ENCODE measurements at regions of chr3 and their contacts with region 1.

Region 1: GRCh38 chr3:32177702-32178198 is 60.7 kb upstream of the CMTM8 start:
- DNase-seq: peak; percentile 88
- ATAC-seq: peak; percentile 97
- H3K4me3 ChIP-seq: peak overlapping the region in 2 of 3 experiments; percentile 49 to 65; a peak in 5 of 6 replicates
- H3K27ac ChIP-seq: no peak overlapping the region
- H3K4me1 ChIP-seq: peaks cover 27% of the 10 kb centered on the region
- H3K27me3 ChIP-seq: peaks cover 0 to 4% of the 10 kb centered on the region in 2 experiments; a peak in 2 of 5 replicates
- CTCF ChIP-seq: peak; percentile 98
- EP300 ChIP-seq: 0 out of 4 replicates have a peak, but pooled peaks of 1 of the 2 experiments have one; percentile 36
- POLR2A ChIP-seq: no peak
- RAD21 ChIP-seq: peak; percentile 89

Region 2: DNA sequence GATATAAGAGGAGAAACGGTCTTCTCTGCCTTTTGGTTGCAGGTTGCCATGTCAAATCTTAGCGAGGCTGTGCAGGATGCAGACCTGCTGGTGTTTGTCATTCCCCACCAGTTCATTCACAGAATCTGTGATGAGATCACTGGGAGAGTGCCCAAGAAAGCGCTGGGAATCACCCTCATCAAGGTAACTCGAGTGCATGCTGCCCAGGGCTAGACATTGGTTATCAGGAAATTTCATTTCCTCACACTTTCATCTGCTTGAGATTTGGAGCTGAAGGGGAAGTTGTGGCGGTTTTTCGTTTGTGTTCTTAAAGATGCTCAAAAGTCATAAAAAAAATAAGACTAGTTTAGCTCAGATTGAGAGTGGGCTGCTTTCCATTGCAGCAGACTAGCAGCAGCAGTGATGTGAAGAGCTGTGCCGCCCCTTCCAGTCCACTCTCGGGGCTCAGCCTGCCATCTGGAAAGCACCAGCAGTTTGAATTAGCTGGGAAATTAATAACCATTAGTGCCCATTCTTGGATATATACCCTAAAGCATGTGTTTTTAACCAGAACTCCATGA is 39.1 kb before region 1 on chr3:
- CTCF ChIA-PET with region 1: no interaction called
- POLR2A ChIA-PET with region 1: no interaction called
- in situ Hi-C with region 1: no loop called
- intact Hi-C with region 1: no loop called
- DNase-seq: no peak
- ATAC-seq: no peak
- H3K4me3 ChIP-seq: no peak overlapping the region
- H3K27ac ChIP-seq: no peak overlapping the region
- H3K4me1 ChIP-seq: peaks cover 12% of the 10 kb centered on the region
- H3K27me3 ChIP-seq: no peaks in the 10 kb centered on the region
- CTCF ChIP-seq: no peak
- EP300 ChIP-seq: no peak
- POLR2A ChIP-seq: no peak
- RAD21 ChIP-seq: no peak

Region 3: GRCh38 chr3:32226870-32227500 is 49.2 kb after region 1 on chr3:
- CTCF ChIA-PET with region 1: no interaction called
- POLR2A ChIA-PET with region 1: no interaction called
- in situ Hi-C with region 1: no loop called
- intact Hi-C with region 1: no loop called
- DNase-seq: no peak
- ATAC-seq: no peak
- H3K4me3 ChIP-seq: no peak overlapping the region
- H3K27ac ChIP-seq: no peak overlapping the region
- H3K4me1 ChIP-seq: peaks cover 80% of the 10 kb centered on the region
- H3K27me3 ChIP-seq: no peaks in the 10 kb centered on the region
- CTCF ChIP-seq: no peak
- EP300 ChIP-seq: no peak
- POLR2A ChIP-seq: no peak
- RAD21 ChIP-seq: no peak

Region 4: GRCh38 chr3:32238453-32239306 is 60.9 kb after region 1 on chr3 and contains the start of gene CMTM8:
- CTCF ChIA-PET with region 1: interaction called, 44 read pairs
- POLR2A ChIA-PET with region 1: interaction called, 3 read pairs
- in situ Hi-C with region 1: loop called (anchors 5 kb)
- intact Hi-C with region 1: loop called (anchors 1 kb)
- DNase-seq: peak; percentile 35
- ATAC-seq: peak; percentile 81
- H3K4me3 ChIP-seq: peak within 1 kb of the TSS; percentile 84 to 92 (median 87)
- H3K27ac ChIP-seq: peak within 1 kb of the TSS; percentile 95
- H3K4me1 ChIP-seq: peaks cover 68% of the 10 kb centered on the region
- H3K27me3 ChIP-seq: no peaks in the 10 kb centered on the region
- CTCF ChIP-seq: no peak; the same call in 1 of the 2 replicates
- EP300 ChIP-seq: no peak
- POLR2A ChIP-seq: peak; percentile 46 to 79
- RAD21 ChIP-seq: no peak; the same call in 1 of the 2 replicates
- total RNA-seq, gene CMTM8: 6.6 and 8.9 TPM in 2 replicates

Region 5: DNA sequence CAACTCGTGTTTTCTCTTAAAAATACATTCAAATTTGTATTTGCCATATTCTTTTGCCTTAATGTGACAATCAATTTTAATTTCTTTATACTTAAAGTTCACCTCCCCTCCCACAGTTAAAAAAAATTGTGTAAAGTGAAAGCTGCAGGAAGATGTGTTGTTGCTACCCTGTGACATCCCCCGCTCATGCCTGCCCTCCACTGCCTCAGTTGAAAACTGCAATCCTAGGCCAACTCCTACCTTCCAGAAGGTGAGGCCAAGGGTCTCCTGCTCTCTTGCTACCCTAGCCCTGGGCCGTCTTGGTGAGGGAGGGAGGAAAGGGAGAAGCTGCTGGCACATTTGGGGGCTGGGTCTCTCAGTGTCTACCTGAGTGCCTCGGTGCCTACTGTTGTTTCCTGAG is 156.9 kb after region 1 on chr3:
- CTCF ChIA-PET with region 1: interaction called, 52 read pairs
- POLR2A ChIA-PET with region 1: no interaction called
- in situ Hi-C with region 1: loop called (anchors 5 kb)
- intact Hi-C with region 1: no loop called
- DNase-seq: no peak
- ATAC-seq: peak; percentile 79
- H3K4me3 ChIP-seq: no peak overlapping the region
- H3K27ac ChIP-seq: no peak overlapping the region
- H3K4me1 ChIP-seq: peaks cover 25% of the 10 kb centered on the region
- H3K27me3 ChIP-seq: no peaks in the 10 kb centered on the region
- CTCF ChIP-seq: peak; percentile 62
- EP300 ChIP-seq: no peak
- POLR2A ChIP-seq: no peak
- RAD21 ChIP-seq: peak; percentile 45; the same call in 1 of the 2 replicates

Region 6: DNA sequence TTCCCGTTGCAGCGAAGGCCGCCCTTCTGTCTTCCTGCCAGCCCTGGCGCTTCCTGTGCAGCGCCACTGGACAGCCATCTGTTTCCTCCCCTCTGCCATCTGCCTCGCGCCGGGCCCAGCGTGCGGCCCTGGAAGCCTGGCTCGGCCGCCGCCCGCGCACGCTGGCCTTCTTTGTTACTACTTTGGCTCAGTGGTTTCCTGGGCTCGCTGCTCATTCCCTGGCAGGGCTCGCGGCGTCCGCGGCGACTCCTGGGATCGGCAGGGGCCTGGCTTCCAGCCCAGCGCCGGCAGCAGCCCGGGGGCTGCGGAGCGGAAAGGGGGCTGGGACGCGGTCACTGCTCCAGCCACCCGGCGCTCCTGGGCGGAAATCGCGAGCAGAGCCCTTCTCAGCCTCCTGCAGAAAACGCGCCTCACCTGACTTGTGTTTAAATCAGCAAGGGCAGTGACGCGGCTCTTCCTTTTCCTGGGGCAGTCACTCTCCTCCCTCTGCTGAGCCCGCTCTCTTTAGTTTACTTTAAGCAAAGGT is 223.9 kb after region 1 on chr3:
- CTCF ChIA-PET with region 1: interaction called, 9 read pairs
- POLR2A ChIA-PET with region 1: no interaction called
- in situ Hi-C with region 1: no loop called
- intact Hi-C with region 1: loop called (anchors 1 kb)
- DNase-seq: peak; percentile 46
- ATAC-seq: peak; percentile 96
- H3K4me3 ChIP-seq: peak overlapping the region; percentile 69 to 75 (median 73)
- H3K27ac ChIP-seq: peak overlapping the region; percentile 87
- H3K4me1 ChIP-seq: peaks cover 51% of the 10 kb centered on the region
- H3K27me3 ChIP-seq: no peaks in the 10 kb centered on the region
- CTCF ChIP-seq: no peak
- EP300 ChIP-seq: no peak
- POLR2A ChIP-seq: peak in 1 of 2 experiments; percentile 33; a peak in 1 of 4 replicates
- RAD21 ChIP-seq: peak; percentile 55; the same call in 1 of the 2 replicates

Measured in HepG2 (cell line).